ENCODE measurements at regions of chr14 and their contacts with region 1.

Region 1: GRCh38 chr14:75577729-75578101 is 705 bp upstream of the FLVCR2 start:
- DNase-seq: peak; percentile 57 to 96 (median 80)

Region 2: DNA sequence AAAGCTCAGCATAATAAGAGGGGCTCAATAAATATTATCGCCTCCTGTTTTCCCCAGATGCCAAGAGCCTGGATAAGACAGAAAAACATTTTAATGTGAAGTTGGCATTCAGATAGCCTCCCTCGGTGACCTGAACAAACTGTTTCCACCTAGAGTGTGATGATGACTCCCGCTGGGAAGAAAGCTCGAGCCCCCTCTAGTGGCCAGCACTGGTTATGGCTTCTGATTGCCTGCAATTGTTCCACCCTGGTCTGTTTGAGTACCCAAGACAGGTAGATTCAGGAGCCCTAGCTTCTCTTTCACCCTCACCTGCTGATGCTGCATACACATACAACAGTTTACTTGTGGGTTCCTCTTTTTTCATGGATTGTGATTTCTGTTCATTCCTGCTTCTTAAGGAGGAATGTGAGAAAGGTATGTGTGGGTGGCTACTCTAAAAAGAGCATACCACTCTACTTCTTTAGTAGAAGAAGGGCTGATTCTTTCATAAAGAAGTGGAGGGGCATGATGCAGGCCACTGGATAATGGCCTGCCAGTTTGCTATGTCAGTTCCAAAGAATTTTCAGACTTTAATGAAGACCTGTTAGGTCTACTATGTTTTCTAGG is 76.5 kb after region 1 on chr14:
- intact Hi-C with region 1: loop called (anchors 1 kb)
- DNase-seq: peak; percentile 55 to 96 (median 85)

Measured in posterior cingulate gyrus (tissue), 11 donors.